ENCODE measurements at regions of chr2 and their contacts with region 1.

Region 1: DNA sequence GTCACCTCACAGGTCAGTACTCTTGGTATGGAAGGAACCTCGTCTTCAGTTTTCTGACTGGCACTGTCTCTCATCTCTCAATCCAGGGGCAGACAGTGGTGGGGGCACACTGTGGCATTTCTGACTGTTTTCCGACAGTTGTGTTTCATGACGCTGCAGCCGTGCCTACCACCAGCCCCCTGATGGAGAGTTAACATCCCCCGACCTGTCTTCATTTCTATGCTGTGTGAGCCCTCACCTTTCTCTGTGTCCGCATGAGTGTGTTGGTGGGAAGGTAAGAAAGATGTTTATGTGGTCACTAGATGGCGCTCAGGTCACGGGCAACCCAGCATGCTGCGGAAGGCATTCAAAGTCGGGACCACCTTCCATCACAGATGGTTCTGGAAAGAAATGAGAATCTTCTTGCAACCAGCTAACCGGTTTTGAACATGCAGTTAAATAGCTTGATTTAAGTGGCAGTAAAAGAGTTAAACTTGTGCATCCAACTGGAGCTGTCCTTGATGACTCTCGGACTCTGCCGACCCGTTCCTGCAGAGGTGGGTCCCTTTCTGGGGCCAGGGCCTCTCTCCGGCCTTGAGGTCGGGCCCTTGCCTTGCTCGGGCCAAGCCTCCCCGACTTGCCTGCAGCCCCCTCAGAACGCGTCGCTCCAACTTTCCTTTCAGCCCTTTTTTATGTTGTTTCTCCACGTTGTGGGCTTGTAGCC is 92.4 kb downstream of the DYSF start:
- DNase-seq: peak; percentile 83

Region 2: GRCh38 chr2:71291398-71291797 is 254.3 kb before region 1 on chr2:
- in situ Hi-C with region 1: no loop called
- DNase-seq: no peak

Region 3: DNA sequence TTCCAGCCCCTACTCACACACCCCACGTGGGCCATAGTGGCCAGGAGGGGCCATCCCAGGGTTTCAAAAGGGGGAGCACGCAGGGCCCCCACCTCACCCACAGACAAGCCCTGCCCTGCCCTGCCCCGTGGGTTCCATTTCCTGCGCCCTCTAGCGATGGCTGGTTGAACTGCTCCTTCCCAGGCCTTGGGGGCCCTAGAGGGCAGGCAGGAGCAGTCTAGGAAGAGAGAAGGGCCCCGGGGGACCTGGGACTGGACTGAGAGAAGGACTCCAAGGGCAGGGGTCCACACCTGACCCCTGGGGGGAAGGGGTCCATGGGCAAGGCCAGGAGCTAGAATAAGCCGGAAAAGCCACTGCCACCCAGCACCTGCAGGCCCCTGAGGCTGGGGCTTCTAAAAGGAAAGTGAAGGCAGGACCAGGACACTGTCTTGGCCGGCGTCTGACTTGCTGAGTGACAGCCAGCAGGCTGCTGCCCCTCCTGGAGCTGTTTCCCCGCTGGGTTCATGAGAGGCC is 591.8 kb after region 1 on chr2:
- in situ Hi-C with region 1: loop called (anchors 25 kb)
- DNase-seq: peak; percentile 65

Measured in KBM-7 (cell line).